Activated CD4-positive, alpha-beta T cell treated with anti-CD3 and anti-CD28 coated beads for 36 hours (primary cell): ENCODE measurements at regions of chr14 and their contacts with region 1.

Region 1: GRCh38 chr14:75293920-75294642 is 15.5 kb downstream of the FOS start:
- DNase-seq: peak; percentile 97
- ATAC-seq: peak; percentile 96
- H3K4me3 Mint-ChIP-seq: peak overlapping the region; percentile 73
- H3K27ac Mint-ChIP-seq: peak overlapping the region; percentile 85
- H3K4me1 Mint-ChIP-seq: peaks cover 22% of the 10 kb centered on the region
- H3K27me3 Mint-ChIP-seq: peaks cover 3% of the 10 kb centered on the region

Region 2: DNA sequence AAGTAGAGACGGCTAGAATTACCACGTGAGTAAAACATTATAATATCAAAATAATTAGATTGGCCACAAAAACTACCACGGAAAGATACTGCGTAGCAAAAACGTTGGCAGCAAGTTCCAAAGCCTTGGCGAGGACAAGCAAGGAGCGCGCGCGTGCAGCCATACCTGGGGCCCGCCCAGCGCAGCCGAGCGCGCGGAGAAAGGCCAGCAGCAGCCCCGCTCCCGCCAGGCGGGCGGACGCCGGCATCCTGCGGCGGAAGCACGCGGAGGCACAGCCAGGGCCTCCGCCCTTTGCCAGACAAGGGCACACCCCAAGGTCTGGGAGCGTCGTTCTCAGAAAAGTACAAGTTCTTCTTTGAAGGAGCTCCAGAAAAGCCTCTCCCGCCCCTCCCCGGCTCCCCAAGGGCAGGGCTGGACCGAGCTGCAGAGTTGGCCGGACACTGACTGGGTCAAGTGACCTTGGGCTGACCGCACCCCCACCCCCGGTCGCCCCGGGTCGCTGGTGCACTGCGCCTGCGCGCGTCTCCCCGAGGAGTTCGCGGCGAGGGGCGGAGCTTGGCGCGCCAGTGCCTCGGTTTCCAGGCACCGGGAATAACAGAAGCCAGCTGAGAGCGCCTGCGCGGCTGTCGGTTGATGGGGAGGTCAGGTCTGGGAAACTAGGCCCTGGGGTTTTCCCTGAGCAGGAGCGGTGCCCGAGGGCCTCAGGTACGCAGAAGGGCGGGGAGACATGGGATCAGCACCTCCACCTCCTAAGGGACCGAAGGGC is 224.9 kb before region 1 on chr14 and contains the start of gene ZC2HC1C:
- CTCF ChIA-PET with region 1: no interaction called
- POLR2A ChIA-PET with region 1: no interaction called
- intact Hi-C with region 1: loop called in 1 of 2 experiments (anchors 2 kb)
- DNase-seq: peak; percentile 79
- ATAC-seq: peak; percentile 93
- H3K4me3 Mint-ChIP-seq: no peak within 1 kb of the TSS
- H3K27ac Mint-ChIP-seq: peak within 1 kb of the TSS; percentile 82
- H3K4me1 Mint-ChIP-seq: peaks cover 9% of the 10 kb centered on the region
- H3K27me3 Mint-ChIP-seq: no peaks in the 10 kb centered on the region
- total RNA-seq, gene ZC2HC1C: 1.2 to 1.3 TPM

Region 3: GRCh38 chr14:75132382-75133086 is 161.5 kb before region 1 on chr14:
- CTCF ChIA-PET with region 1: interaction called, 221 read pairs
- POLR2A ChIA-PET with region 1: no interaction called
- intact Hi-C with region 1: loop called (anchors 1 kb)
- DNase-seq: peak; percentile 53
- ATAC-seq: peak; percentile 82
- H3K4me3 Mint-ChIP-seq: no peak overlapping the region
- H3K27ac Mint-ChIP-seq: peak overlapping the region; percentile 33
- H3K4me1 Mint-ChIP-seq: peaks cover 18% of the 10 kb centered on the region
- H3K27me3 Mint-ChIP-seq: no peaks in the 10 kb centered on the region

Region 4: GRCh38 chr14:75249251-75249957 is 44.7 kb before region 1 on chr14:
- CTCF ChIA-PET with region 1: interaction called, 16 read pairs
- POLR2A ChIA-PET with region 1: interaction called, 7 read pairs
- intact Hi-C with region 1: loop called (anchors 1 kb)
- DNase-seq: peak; percentile 91
- ATAC-seq: peak; percentile 81
- H3K4me3 Mint-ChIP-seq: peak overlapping the region; percentile 11
- H3K27ac Mint-ChIP-seq: peak overlapping the region; percentile 82
- H3K4me1 Mint-ChIP-seq: peaks cover 57% of the 10 kb centered on the region
- H3K27me3 Mint-ChIP-seq: peaks cover 2% of the 10 kb centered on the region

Region 5: GRCh38 chr14:75278422-75279161 is 15.5 kb before region 1 on chr14 and contains the start of gene FOS:
- CTCF ChIA-PET with region 1: interaction called, 35 read pairs
- POLR2A ChIA-PET with region 1: interaction called, 6 read pairs
- intact Hi-C with region 1: loop called (anchors 1 to 2 kb)
- DNase-seq: peak; percentile 92
- ATAC-seq: peak; percentile 91
- H3K4me3 Mint-ChIP-seq: peak within 1 kb of the TSS; percentile 85
- H3K27ac Mint-ChIP-seq: peak within 1 kb of the TSS; percentile 95
- H3K4me1 Mint-ChIP-seq: peaks cover 44% of the 10 kb centered on the region
- H3K27me3 Mint-ChIP-seq: peaks cover 24% of the 10 kb centered on the region
- total RNA-seq, gene FOS: 16.0 to 21.1 TPM